ENCODE measurements at regions of chr2 and their contacts with region 1.

Region 1: DNA sequence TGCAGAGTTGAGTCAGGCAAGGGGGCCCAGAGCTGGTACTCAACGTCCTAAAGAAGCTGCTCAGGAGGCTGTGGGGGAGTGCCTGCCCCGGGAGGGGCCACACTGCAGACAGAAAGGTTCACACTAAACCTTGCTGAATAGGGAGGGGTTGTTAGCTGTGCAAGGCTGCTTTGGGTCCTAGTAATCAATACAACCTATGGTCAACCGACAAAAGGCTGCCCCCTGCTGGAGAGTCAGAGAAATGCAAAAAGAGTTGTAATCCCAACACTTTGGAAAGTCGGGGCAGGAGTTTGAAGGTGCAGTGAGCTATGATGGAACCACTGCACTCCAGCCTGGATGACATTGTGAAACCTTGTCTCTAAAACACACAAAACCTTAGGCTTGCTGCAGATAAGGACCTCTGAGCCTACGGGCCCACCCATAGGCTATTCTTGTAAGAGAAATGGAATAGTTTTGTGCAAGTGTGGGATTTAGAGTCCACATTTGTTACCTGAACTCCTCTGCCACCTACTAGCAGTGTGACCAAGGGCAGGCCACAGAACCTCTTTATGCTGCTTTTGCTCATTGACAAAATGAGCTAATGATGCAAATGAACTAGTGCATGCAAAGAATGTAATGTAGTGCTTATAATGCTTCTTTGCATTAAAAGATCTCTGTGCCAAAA is 81.5 kb downstream of the PRPF40A start:
- DNase-seq: peak; percentile 58
- CTCF ChIP-seq: peak; percentile 76

Region 2: GRCh38 chr2:152175458-152176325 is 460.1 kb before region 1 on chr2 and contains the start of gene STAM2:
- CTCF ChIA-PET with region 1: interaction called, 60 read pairs
- POLR2A ChIA-PET with region 1: interaction called, 4 read pairs
- DNase-seq: peak; percentile 94
- CTCF ChIP-seq: peak; percentile 97

Region 3: GRCh38 chr2:152189622-152190495 is 445.9 kb before region 1 on chr2:
- CTCF ChIA-PET with region 1: interaction called, 50 read pairs
- POLR2A ChIA-PET with region 1: no interaction called
- DNase-seq: peak; percentile 48
- CTCF ChIP-seq: peak; percentile 79

Region 4: GRCh38 chr2:152620208-152620607 is 15.6 kb before region 1 on chr2:
- CTCF ChIA-PET with region 1: interaction called, 45 read pairs
- POLR2A ChIA-PET with region 1: no interaction called
- DNase-seq: no peak
- CTCF ChIP-seq: no peak

Region 5: GRCh38 chr2:152658221-152658620 is 22.5 kb after region 1 on chr2:
- CTCF ChIA-PET with region 1: interaction called, 25 read pairs
- POLR2A ChIA-PET with region 1: no interaction called
- DNase-seq: no peak
- CTCF ChIP-seq: no peak

Region 6: DNA sequence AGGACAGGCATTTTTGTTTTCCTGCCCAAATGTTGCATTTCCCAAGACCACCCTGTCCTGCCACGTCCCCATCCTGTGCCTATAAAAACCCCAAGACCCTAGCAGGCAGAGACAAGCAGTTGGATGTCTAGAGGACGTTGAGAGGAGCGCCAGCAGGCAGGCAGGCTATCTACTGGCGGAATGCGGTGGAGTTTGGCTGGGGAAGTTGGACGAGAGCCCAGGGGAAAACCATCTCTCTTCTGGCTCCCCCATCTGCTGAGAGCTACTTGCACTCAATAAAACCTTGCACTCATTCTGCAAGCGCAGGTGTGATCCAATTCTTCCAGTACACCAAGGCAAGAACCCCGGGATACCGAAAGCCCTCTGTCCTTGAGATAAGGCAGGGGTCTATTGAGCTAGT is 155.1 kb after region 1 on chr2:
- CTCF ChIA-PET with region 1: no interaction called
- POLR2A ChIA-PET with region 1: no interaction called
- DNase-seq: no peak
- CTCF ChIP-seq: no peak

Region 7: GRCh38 chr2:152861349-152861942 is 225.7 kb after region 1 on chr2:
- CTCF ChIA-PET with region 1: no interaction called
- POLR2A ChIA-PET with region 1: no interaction called
- DNase-seq: peak; percentile 23
- CTCF ChIP-seq: peak; percentile 31